ENCODE measurements at regions of chr1 and their contacts with region 1.

Region 1: GRCh38 chr1:112698366-112699310 is 8.3 kb downstream of the RHOC start:
- DNase-seq: peak; percentile 80
- H3K4me3 ChIP-seq: no peak overlapping the region
- H3K27ac ChIP-seq: peak overlapping the region; percentile 86 to 98
- H3K4me1 ChIP-seq: peaks cover 49% of the 10 kb centered on the region
- H3K27me3 ChIP-seq: no peaks in the 10 kb centered on the region
- CTCF ChIP-seq: no peak
- POLR2A ChIP-seq: no peak

Region 2: DNA sequence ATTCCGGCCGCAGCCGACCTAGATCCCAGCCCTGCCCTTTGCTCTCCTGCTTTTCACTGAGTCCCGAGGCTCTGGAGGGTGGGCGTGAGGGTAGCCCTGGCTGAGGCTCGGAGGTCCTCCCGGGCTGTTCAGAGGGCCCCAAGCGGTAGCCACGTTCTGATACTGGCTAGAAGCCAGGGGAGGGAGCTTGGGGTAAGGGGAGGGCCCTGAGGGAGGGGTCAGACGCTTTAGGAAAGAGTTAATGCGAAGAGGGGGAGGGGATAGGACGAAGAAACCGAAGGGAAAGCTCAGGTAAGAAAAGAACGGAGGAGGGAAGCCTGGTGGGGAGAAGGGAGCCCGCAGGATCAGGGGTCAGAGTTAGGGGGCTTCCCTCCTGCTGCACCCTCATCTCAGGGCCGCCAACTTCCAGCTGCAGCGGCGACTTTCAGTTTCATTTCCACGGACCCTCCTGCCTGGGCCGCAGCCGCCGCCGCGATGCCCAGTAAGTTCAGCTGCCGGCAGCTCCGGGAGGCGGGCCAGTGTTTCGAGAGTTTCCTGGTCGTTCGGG is 24.1 kb before region 1 on chr1 and contains the start of gene MOV10:
- intact Hi-C with region 1: loop called (anchors 2 kb)
- DNase-seq: peak; percentile 58
- H3K4me3 ChIP-seq: peak within 1 kb of the TSS; percentile 66 to 75
- H3K27ac ChIP-seq: peak within 1 kb of the TSS; percentile 94
- H3K4me1 ChIP-seq: no peaks in the 10 kb centered on the region
- H3K27me3 ChIP-seq: no peaks in the 10 kb centered on the region
- CTCF ChIP-seq: no peak
- POLR2A ChIP-seq: no peak
- total RNA-seq, gene MOV10: 47.0 to 169 TPM

Measured in prostate gland (tissue), 2 donors.